Gastrocnemius medialis (tissue), 4 donors: ENCODE measurements at regions of chr10 and their contacts with region 1.

Region 1: GRCh38 chr10:73044378-73045285 is 52.0 kb downstream of the P4HA1 start:
- DNase-seq: no peak
- ATAC-seq: peak; percentile 32 to 51
- H3K4me3 ChIP-seq: no peak overlapping the region
- H3K27ac ChIP-seq: peak overlapping the region; percentile 20 to 32 (median 25)
- H3K4me1 ChIP-seq: peaks cover 0 to 3% of the 10 kb centered on the region in 2 donors
- H3K27me3 ChIP-seq: no peaks in the 10 kb centered on the region
- CTCF ChIP-seq: no peak
- POLR2A ChIP-seq: no peak

Region 2: DNA sequence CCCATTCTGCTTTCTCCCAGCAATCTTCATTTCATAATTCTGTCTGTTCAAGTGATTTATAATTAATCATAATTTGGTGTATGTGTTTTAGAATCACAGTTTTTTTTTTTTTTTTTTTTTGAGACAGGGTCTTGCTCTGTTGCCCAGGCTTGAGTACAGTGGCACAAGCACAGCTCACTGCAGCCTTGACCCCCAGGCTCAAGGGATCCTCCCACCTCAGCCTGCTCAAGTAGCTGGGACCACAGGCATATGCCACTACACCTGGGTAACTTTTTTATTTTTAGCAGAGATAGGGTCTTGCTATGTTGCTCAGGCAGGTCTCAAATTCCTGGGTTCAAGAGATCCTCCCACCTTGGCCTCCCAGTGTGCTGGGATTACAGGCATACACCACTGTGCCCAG is 40.8 kb before region 1 on chr10:
- in situ Hi-C with region 1: no loop called
- intact Hi-C with region 1: loop called (anchors 5 kb)
- DNase-seq: no peak
- ATAC-seq: no peak
- H3K4me3 ChIP-seq: no peak overlapping the region
- H3K27ac ChIP-seq: no peak overlapping the region
- H3K4me1 ChIP-seq: no peaks in the 10 kb centered on the region
- H3K27me3 ChIP-seq: no peaks in the 10 kb centered on the region
- CTCF ChIP-seq: no peak
- POLR2A ChIP-seq: no peak

Region 3: GRCh38 chr10:73433538-73433867 is 388.9 kb after region 1 on chr10 and contains the start of gene MSS51:
- in situ Hi-C with region 1: no loop called
- intact Hi-C with region 1: no loop called
- DNase-seq: peak; percentile 5 to 66
- ATAC-seq: peak; percentile 95 to 97
- H3K4me3 ChIP-seq: peak within 1 kb of the TSS; percentile 37 to 55 (median 47)
- H3K27ac ChIP-seq: peak within 1 kb of the TSS; percentile 77 to 88 (median 83)
- H3K4me1 ChIP-seq: peaks cover 42 to 48% of the 10 kb centered on the region in 2 donors
- H3K27me3 ChIP-seq: no peaks in the 10 kb centered on the region
- CTCF ChIP-seq: no peak
- POLR2A ChIP-seq: no peak
- total RNA-seq, gene MSS51: 1.4 to 49.4 (median 30.4) TPM